ENCODE measurements at regions of chr6 and their contacts with region 1.

Region 1: DNA sequence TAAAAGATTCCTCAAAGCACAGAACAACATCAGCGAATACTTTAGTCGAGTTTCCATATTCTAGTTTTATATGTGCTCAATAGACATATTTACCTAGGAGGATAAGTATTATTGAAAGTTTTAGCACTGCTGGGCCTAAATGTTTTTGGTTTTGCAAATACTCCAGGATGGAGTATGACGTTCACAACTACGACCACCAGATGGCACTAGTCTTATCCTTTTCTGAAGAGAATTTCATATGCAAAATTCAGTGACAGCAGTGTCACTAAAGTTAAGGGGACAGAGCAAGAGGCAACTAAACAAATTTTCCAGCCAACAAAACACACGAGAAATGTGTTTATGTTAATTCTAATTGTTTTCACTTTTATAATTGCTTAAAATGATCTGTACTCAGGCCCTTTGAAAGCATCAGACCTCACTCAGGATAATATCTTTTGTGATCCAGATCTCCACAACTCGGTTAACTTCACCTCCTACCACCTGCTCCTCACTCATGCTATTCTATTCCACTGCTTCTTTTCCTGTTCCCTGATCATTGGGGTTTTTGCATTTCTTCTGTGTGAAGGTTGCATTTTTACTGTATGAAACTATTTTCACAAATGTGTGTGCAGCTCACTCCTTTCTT is 220.8 kb downstream of the TRDN start:
- DNase-seq: peak; percentile 67
- H3K4me3 ChIP-seq: no peak overlapping the region
- H3K27ac ChIP-seq: no peak overlapping the region
- H3K4me1 ChIP-seq: no peaks in the 10 kb centered on the region
- H3K27me3 ChIP-seq: 0 out of 2 replicates have a peak, but pooled peaks cover under 1% of the 10 kb centered on the region

Region 2: GRCh38 chr6:123091091-123091895 is 324.7 kb before region 1 on chr6:
- in situ Hi-C with region 1: no loop called
- DNase-seq: no peak
- H3K4me3 ChIP-seq: no peak overlapping the region
- H3K27ac ChIP-seq: no peak overlapping the region
- H3K4me1 ChIP-seq: no peaks in the 10 kb centered on the region
- H3K27me3 ChIP-seq: no peaks in the 10 kb centered on the region

Region 3: DNA sequence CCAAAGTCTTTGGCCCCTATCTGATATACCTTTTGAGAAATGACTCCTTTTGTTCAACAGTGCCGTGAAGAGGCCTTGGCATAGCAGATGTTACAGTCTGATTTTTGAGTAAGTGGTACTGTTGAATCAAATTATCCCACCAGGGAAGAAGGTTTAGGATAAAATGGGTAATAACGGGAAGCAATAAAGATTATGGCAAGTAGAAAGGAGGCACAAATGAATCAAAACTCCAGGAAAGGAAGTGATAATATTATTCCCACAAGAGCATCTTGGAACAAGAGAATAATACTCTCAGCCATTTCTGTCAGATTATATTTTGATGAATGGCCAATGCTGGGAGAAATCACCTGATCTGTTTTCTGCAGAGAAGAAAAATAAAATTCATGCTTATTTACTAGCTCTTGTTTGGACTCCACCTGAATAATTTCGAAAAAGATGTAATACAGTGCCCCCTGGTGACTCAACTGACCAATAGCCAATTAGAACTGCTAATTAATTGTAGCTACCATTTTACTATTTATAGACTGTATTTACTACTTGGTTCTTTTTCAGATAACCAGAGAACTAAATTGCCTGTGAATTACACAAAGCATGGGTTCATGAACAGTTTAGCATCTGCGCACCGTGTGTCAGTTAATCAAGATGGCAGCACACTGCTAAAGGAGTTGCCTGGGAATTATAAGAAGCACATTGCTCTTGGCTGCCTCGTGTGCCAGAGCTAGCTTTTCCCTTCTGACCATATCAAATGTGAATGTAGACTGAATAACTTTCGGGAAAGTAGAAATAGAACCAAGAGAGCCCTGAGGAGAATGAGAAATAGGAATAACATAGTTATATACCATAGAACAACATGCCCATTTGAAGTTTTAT is 299.3 kb after region 1 on chr6:
- in situ Hi-C with region 1: loop called (anchors 10 kb)
- DNase-seq: peak; percentile 49
- H3K4me3 ChIP-seq: no peak overlapping the region
- H3K27ac ChIP-seq: no peak overlapping the region
- H3K4me1 ChIP-seq: no peaks in the 10 kb centered on the region
- H3K27me3 ChIP-seq: no peaks in the 10 kb centered on the region; the same call in none of the 2 replicates